Heart right ventricle (tissue), 16 donors: ENCODE measurements at regions of chr1 and their contacts with region 1.

Region 1: DNA sequence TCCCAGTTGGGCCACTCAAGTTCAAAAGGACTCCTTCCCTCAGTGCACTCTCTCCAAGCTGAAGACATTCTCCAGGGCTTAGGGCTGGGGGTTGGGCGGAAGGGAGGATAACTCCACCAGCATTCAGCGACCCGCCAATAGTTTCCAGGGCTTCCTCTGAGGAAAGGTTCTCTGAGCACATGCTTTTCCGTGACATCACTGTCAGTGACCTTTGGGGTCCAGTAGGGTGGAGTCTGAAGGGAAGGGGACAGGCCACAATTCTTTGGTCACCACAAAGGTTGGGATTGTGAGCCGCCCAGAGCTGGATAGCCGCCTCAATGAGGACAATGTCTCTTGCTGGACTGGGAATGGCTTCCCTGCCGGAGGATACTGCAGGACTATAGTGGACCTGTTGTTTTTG is 22.8 kb upstream of the RXRG start:
- DNase-seq: no peak
- ATAC-seq: peak in 6 of 8 donors; percentile 32 to 64 (median 49)
- H3K4me3 ChIP-seq: no peak overlapping the region
- H3K27ac ChIP-seq: no peak overlapping the region
- H3K4me1 ChIP-seq: peaks cover 0 to 4% (median 0%) of the 10 kb centered on the region in 9 donors
- H3K27me3 ChIP-seq: peaks cover 0 to 8% (median 0%) of the 10 kb centered on the region in 7 donors
- CTCF ChIP-seq: no peak

Region 2: GRCh38 chr1:165435801-165436200 is 31.9 kb before region 1 on chr1:
- intact Hi-C with region 1: loop called in 1 of 10 experiments (anchors 1 kb)
- DNase-seq: no peak
- ATAC-seq: no peak
- H3K4me3 ChIP-seq: no peak overlapping the region
- H3K27ac ChIP-seq: no peak overlapping the region
- H3K4me1 ChIP-seq: peaks cover 0 to 1% (median 0%) of the 10 kb centered on the region in 9 donors
- H3K27me3 ChIP-seq: peaks cover 0 to under 1% (median 0%) of the 10 kb centered on the region in 7 donors
- CTCF ChIP-seq: no peak